ENCODE measurements at regions of chr5 and their contacts with region 1.

Region 1: DNA sequence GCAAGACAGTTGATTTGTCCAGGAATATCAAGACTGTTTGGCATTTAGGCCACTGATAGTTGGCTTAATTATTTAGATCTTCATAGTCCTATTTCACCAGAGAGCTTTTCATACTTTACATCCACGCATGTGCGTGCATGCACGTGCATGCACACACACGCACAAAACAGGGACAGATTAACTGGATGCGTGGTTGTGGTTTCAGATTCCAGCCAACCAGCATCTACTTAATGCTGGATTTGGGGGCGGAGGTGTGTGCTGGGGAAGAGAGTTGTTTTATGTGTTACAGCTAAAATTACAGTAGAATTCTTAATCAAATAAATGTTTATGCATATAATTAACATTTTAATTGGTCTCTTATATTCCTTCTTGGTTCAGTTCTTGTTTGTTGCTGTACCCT is 7.3 kb downstream of the RNF14 start:
- DNase-seq: no peak
- H3K4me3 Mint-ChIP-seq: no peak overlapping the region
- H3K27ac Mint-ChIP-seq: no peak overlapping the region
- H3K4me1 Mint-ChIP-seq: peaks cover 17% of the 10 kb centered on the region
- H3K27me3 Mint-ChIP-seq: no peaks in the 10 kb centered on the region

Region 2: DNA sequence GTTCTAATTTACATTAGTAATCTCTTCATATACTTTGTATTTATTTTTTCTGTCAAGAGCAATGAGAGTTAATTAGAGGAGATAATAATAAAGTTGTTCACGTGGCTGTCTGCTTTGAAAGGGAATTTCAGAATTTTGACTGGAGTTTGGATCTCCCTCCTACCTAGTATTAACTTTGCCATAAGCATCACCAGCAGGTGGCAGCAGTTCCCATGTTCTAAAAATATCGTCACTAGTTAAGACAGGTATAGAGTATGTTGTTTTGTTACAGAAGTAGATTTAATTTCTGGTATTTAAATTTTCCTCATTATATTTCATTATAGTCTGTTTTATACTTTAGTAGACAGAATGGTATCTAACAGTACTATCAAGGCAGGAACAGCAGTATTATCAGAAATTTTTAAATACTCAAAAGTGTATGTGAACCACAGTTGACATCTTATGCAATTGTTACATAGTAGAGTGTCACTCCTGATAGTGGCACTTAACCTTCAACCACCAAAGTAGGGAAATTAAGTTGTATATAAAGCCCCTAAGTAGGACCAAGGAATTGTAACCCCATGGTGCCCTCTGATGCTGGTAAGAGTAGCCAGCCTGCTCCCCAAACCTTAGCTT is 16.3 kb after region 1 on chr5:
- CTCF ChIA-PET with region 1: interaction called, 32 read pairs
- DNase-seq: peak; percentile 87
- H3K4me3 Mint-ChIP-seq: no peak overlapping the region
- H3K27ac Mint-ChIP-seq: no peak overlapping the region
- H3K4me1 Mint-ChIP-seq: no peaks in the 10 kb centered on the region
- H3K27me3 Mint-ChIP-seq: no peaks in the 10 kb centered on the region